ENCODE measurements at regions of chr9 and their contacts with region 1.

Region 1: DNA sequence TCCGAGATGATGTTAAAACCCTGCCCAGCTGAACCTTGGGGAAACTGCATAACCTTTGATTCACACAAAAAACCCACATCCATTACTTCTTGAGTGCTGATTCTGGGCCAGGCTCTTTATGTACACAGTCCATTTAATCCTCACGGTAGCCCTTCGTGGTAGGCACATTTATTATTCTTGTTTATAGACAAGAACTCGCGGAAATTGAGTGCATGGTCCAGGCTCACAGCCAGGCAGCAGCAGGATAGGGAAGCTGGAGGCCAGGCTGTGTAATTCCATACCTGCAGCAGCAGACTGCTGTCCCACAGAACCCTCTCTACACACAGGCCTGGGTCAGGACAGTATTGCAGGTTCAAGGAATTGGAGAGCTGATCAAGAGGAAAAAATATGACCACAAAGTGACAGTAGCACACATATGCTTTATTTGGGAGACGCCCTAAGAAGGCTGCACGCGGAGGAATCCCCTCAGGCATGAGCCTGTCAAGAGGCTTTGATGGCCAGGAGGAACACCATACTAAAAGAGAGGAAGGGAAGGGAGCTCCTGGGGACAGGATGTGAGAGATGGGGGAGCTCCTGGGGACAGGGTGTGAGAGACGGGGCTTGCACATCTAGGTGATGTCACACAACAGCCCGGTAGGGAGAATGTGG is 28.4 kb upstream of the FAM120A start:
- DNase-seq: peak; percentile 10
- ATAC-seq: peak; percentile 56
- H3K4me3 ChIP-seq: no peak overlapping the region
- H3K27ac ChIP-seq: no peak overlapping the region
- H3K4me1 ChIP-seq: no peaks in the 10 kb centered on the region
- H3K27me3 ChIP-seq: peaks cover 1% of the 10 kb centered on the region; the same call in 1 of the 2 replicates
- CTCF ChIP-seq: no peak
- POLR2A ChIP-seq: no peak
- RAD21 ChIP-seq: no peak

Region 2: GRCh38 chr9:93774331-93775102 is 351.4 kb after region 1 on chr9:
- CTCF ChIA-PET with region 1: no interaction called
- POLR2A ChIA-PET with region 1: no interaction called
- dilution Hi-C with region 1: no loop called
- in situ Hi-C with region 1: loop called (anchors 25 kb)
- intact Hi-C with region 1: no loop called
- DNase-seq: no peak
- ATAC-seq: no peak
- H3K4me3 ChIP-seq: no peak overlapping the region
- H3K27ac ChIP-seq: no peak overlapping the region
- H3K4me1 ChIP-seq: no peaks in the 10 kb centered on the region
- H3K27me3 ChIP-seq: no peaks in the 10 kb centered on the region
- CTCF ChIP-seq: no peak
- POLR2A ChIP-seq: no peak
- RAD21 ChIP-seq: no peak